ENCODE measurements at regions of chr4 and their contacts with region 1.

Region 1: GRCh38 chr4:169774466-169775445 is 17.0 kb upstream of the HPF1 start:
- DNase-seq: peak; percentile 66 to 75 (median 73)
- H3K4me3 ChIP-seq: peak overlapping the region in 6 of 7 experiments; percentile 8 to 63 (median 54)
- H3K27ac ChIP-seq: no peak overlapping the region
- H3K4me1 ChIP-seq: peaks cover 0 to 10% (median 5%) of the 10 kb centered on the region in 4 experiments
- H3K27me3 ChIP-seq: peaks cover 0 to 13% (median 0%) of the 10 kb centered on the region in 5 experiments

Region 2: GRCh38 chr4:169506903-169507302 is 267.9 kb before region 1 on chr4:
- CTCF ChIA-PET with region 1: no interaction called
- POLR2A ChIA-PET with region 1: no interaction called
- DNase-seq: no peak
- H3K4me3 ChIP-seq: no peak overlapping the region
- H3K27ac ChIP-seq: no peak overlapping the region
- H3K4me1 ChIP-seq: no peaks in the 10 kb centered on the region
- H3K27me3 ChIP-seq: no peaks in the 10 kb centered on the region

Region 3: GRCh38 chr4:169566021-169566818 is 208.5 kb before region 1 on chr4:
- CTCF ChIA-PET with region 1: no interaction called
- POLR2A ChIA-PET with region 1: no interaction called
- DNase-seq: peak; percentile 53 to 80 (median 75)
- H3K4me3 ChIP-seq: no peak overlapping the region
- H3K27ac ChIP-seq: no peak overlapping the region
- H3K4me1 ChIP-seq: no peaks in the 10 kb centered on the region
- H3K27me3 ChIP-seq: no peaks in the 10 kb centered on the region

Region 4: DNA sequence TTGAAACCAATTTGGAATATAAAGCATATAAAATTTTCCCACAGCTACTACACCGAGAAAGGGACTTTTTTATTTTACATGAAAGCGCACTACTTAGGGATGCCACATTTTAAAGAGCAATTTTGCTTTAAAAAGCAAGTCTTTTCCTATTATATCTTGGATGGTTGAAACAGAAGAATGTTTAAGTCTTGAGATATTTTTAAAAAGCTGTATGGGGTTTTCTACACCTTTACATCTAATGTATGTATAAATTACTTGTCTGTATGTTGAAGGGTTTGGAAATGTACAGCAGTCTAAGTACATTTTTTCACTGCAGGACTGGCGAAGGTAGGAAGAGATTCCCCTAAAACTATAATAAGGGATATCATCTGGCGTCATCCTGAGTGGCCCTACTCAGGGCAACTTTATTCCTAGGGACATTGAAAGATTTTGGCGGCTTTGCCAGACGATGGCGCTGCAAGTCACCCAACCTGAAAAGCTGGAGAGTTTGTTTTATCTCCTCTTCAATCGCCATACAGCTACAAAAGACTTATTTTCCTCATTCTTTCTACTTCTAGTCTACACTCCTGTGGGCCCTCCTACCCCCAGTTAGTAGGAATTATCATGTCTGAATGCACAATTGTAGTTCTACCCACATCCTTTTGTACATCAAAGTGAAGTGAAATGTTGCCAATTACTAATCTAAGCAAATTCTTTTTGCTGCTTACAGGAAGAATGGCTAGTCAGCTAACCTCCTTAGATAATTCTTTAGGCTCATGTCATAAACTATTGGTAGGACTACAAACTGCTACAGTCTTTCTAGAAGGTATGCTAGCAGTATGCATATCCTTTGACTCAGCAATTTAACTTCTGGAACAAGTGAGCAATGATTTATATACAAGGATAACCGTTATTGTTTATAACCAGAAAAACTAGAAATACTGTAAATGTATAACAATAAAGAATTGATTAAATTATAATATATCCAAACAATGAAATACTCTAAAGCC is 161.6 kb before region 1 on chr4:
- CTCF ChIA-PET with region 1: interaction called, 15 read pairs
- POLR2A ChIA-PET with region 1: no interaction called
- DNase-seq: peak; percentile 78 to 79 (median 79)
- H3K4me3 ChIP-seq: peak overlapping the region in 6 of 7 experiments; percentile 91 to 99 (median 95)
- H3K27ac ChIP-seq: peak overlapping the region in 1 of 2 experiments; percentile 97
- H3K4me1 ChIP-seq: peaks cover 3 to 28% (median 18%) of the 10 kb centered on the region in 4 experiments
- H3K27me3 ChIP-seq: no peaks in the 10 kb centered on the region

Region 5: DNA sequence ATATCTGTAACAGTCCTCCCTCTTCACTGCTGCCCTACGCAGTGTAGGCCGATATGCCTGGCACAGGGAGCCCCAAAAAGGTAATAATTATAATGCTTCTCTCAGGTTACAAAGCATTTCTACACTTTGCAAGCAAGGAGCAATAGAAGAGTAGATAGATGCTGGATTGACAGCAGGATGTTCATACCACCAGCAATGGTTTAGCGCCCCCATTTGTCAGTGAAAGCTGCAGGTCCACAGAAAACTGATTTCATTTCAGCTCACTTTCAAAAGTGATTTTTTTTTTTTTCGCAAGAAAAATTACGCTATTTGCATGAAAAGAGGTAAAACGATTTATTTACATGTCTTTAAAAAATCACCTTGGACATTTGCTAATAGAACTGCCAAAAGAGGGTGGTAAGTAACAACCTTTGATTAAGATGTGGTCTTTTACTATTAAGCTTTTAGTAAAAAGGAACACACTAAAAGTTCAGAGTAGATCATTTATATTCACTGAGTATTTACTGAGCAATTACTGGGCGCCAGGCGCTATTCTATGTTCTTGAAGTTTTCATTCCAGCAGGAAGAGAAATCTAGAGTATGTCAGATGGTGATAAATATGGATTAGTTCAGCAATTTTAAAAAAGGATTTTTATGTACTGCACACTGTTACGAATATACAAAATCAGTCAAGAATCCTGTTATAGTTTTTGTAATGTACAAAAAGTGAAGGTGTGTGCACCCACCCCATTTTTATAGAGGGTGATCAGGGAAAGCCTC is 51.4 kb before region 1 on chr4:
- CTCF ChIA-PET with region 1: no interaction called
- POLR2A ChIA-PET with region 1: interaction called, 10 read pairs
- DNase-seq: peak; percentile 23 to 33 (median 28)
- H3K4me3 ChIP-seq: no peak overlapping the region
- H3K27ac ChIP-seq: no peak overlapping the region
- H3K4me1 ChIP-seq: no peaks in the 10 kb centered on the region
- H3K27me3 ChIP-seq: no peaks in the 10 kb centered on the region

Region 6: GRCh38 chr4:169802873-169803272 is 28.1 kb after region 1 on chr4:
- CTCF ChIA-PET with region 1: no interaction called
- POLR2A ChIA-PET with region 1: no interaction called
- DNase-seq: peak; percentile 22 to 84 (median 83)
- H3K4me3 ChIP-seq: no peak overlapping the region
- H3K27ac ChIP-seq: no peak overlapping the region
- H3K4me1 ChIP-seq: peaks cover 0 to 11% (median 4%) of the 10 kb centered on the region in 4 experiments
- H3K27me3 ChIP-seq: no peaks in the 10 kb centered on the region

Region 7: DNA sequence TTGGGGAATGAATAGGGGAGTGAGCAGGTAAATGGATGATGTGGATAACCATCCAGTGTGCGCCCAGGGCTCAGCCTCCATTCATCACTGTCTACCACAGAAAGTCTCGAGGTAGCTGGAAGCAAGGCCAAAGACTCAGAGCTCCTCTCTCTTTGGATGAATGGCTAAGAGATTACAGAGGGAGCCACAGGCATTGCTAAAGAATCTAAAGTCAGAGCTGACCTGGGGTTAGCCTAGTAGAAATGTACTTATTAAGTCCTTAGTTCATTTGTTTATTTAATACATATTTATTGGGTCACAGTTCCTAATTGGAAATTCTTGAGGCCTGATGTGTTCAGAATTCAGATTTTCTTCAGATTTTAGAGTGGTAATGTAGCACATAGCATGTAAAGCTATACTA is 71.6 kb after region 1 on chr4:
- CTCF ChIA-PET with region 1: no interaction called
- POLR2A ChIA-PET with region 1: no interaction called
- DNase-seq: no peak
- H3K4me3 ChIP-seq: no peak overlapping the region
- H3K27ac ChIP-seq: no peak overlapping the region
- H3K4me1 ChIP-seq: no peaks in the 10 kb centered on the region
- H3K27me3 ChIP-seq: peaks cover 0 to 3% (median 0%) of the 10 kb centered on the region in 5 experiments

Measured in common myeloid progenitor, CD34-positive (primary cell).